CD4-positive, alpha-beta T cell (primary cell): ENCODE measurements at regions of chr22 and their contacts with region 1.

Region 1: DNA sequence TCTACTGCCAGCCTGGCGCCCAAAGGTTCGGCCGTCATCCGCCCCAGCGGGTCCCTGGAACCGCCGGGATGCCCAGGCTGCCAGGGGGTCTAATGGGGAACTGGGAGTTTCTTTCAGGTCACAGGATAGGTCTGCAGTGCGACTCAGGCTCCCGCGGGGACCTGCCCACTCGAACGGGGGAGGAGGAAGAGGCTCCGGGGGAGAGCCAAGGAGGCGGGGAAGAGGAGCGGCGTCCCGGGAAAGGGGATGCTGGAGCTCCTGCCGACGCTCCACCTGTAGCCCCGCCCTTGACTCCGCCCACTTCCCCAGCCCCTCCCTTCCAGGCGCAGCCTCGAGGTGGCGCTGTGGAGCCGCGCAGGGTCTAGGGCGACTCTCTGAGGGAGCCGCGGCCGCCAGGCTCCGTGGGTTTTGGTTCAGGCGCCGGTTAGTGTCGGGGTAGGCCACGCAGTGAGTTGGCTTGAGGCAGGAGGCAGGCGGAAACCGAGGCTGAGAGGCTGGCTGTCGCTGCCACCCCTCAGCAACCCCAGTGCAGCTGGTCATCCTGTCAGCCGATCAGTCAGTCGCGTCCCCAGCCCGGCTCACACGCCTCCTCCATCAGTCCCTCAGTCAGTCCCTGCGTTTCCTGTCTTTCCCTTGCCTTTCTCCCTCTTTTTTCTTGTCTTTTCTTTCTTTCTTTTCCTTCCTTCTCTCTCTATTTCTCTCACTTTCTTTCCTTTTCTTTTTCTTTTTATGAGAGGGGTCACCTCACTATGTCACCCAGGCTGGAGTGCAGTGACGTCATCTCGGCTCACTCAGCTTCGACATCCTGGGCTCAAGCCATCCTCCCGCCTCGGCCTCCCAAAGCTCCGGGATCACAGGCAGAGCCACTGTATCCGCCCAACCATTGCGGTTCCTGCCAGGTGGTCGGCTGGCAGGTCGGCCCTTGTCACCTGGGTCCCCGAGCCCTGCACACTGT is 26.4 kb downstream of the YWHAH start:
- DNase-seq: peak; percentile 77 to 93 (median 87)
- ATAC-seq: peak; percentile 93
- H3K4me3 ChIP-seq: peak overlapping the region; percentile 56
- H3K4me3 Mint-ChIP-seq: peak overlapping the region; percentile 82
- H3K27ac ChIP-seq: no peak overlapping the region
- H3K27ac Mint-ChIP-seq: peak overlapping the region; percentile 3
- H3K4me1 ChIP-seq: peaks cover 20% of the 10 kb centered on the region
- H3K4me1 Mint-ChIP-seq: peaks cover 13% of the 10 kb centered on the region
- H3K27me3 ChIP-seq: no peaks in the 10 kb centered on the region
- H3K27me3 Mint-ChIP-seq: no peaks in the 10 kb centered on the region
- CTCF ChIP-seq: peak; percentile 90

Region 2: GRCh38 chr22:31872209-31872608 is 98.6 kb before region 1 on chr22:
- CTCF ChIA-PET with region 1: interaction called, 4 read pairs
- POLR2A ChIA-PET with region 1: no interaction called
- intact Hi-C with region 1: loop called in 1 of 2 experiments (anchors 1 kb)
- DNase-seq: peak in 7 of 14 experiments; percentile 1 to 40 (median 23)
- ATAC-seq: no peak
- H3K4me3 ChIP-seq: no peak overlapping the region
- H3K4me3 Mint-ChIP-seq: no peak overlapping the region
- H3K27ac ChIP-seq: no peak overlapping the region
- H3K27ac Mint-ChIP-seq: no peak overlapping the region
- H3K4me1 ChIP-seq: no peaks in the 10 kb centered on the region
- H3K4me1 Mint-ChIP-seq: no peaks in the 10 kb centered on the region
- H3K27me3 ChIP-seq: no peaks in the 10 kb centered on the region
- H3K27me3 Mint-ChIP-seq: no peaks in the 10 kb centered on the region
- CTCF ChIP-seq: no peak

Region 3: GRCh38 chr22:31954535-31955523 is 15.9 kb before region 1 on chr22:
- CTCF ChIA-PET with region 1: interaction called, 42 read pairs
- POLR2A ChIA-PET with region 1: interaction called, 4 read pairs
- intact Hi-C with region 1: no loop called
- DNase-seq: peak in 1 of 14 experiments; percentile 38
- ATAC-seq: peak; percentile 60
- H3K4me3 ChIP-seq: no peak overlapping the region
- H3K4me3 Mint-ChIP-seq: peak overlapping the region; percentile 31
- H3K27ac ChIP-seq: peak overlapping the region in 1 of 2 donors; percentile 39
- H3K27ac Mint-ChIP-seq: peak overlapping the region; percentile 86
- H3K4me1 ChIP-seq: peaks cover 73% of the 10 kb centered on the region
- H3K4me1 Mint-ChIP-seq: peaks cover 83% of the 10 kb centered on the region
- H3K27me3 ChIP-seq: no peaks in the 10 kb centered on the region
- H3K27me3 Mint-ChIP-seq: no peaks in the 10 kb centered on the region
- CTCF ChIP-seq: no peak

Region 4: GRCh38 chr22:32265882-32266767 is 295.4 kb after region 1 on chr22:
- CTCF ChIA-PET with region 1: interaction called, 9 read pairs
- POLR2A ChIA-PET with region 1: no interaction called
- intact Hi-C with region 1: loop called in 1 of 2 experiments (anchors 2 kb)
- DNase-seq: peak; percentile 40 to 81 (median 56)
- ATAC-seq: peak; percentile 66
- H3K4me3 ChIP-seq: no peak overlapping the region
- H3K4me3 Mint-ChIP-seq: no peak overlapping the region
- H3K27ac ChIP-seq: no peak overlapping the region
- H3K27ac Mint-ChIP-seq: no peak overlapping the region
- H3K4me1 ChIP-seq: peaks cover 4% of the 10 kb centered on the region
- H3K4me1 Mint-ChIP-seq: peaks cover 10% of the 10 kb centered on the region
- H3K27me3 ChIP-seq: no peaks in the 10 kb centered on the region
- H3K27me3 Mint-ChIP-seq: peaks cover 9% of the 10 kb centered on the region
- CTCF ChIP-seq: peak; percentile 86

Region 5: DNA sequence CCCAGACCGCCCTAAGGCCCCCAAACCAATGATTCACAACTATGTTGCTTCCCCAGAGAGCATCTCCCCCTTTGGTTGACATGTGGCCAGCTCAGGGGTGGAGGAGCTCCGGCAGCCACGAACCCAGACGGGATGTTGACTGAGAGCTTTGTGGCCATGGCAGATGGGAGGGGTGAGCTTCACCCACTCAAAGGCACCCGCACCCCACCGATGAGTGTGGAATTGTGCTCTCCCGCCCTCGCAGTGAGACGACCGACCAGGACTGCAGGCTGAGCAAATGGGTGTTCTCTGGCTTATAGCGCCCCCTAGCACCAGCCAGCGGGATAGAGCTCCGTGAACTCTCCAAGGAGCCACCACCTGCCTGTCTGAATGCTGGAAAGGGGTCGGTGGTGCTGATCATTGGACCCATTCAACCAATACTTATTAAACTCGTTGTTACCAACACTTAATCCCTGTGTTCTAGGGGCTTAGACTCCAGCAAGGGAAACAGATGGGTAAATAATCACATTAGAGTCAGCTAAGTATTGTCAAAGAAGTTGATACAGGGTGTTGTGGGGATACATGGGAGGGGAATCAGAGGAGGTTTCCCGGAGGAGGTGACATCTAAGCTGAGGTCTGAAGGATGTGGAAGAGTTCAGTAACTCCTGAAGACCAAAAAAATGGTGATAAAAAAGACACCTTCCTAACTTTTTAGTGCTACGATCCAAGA is 826.3 kb after region 1 on chr22:
- CTCF ChIA-PET with region 1: no interaction called
- POLR2A ChIA-PET with region 1: no interaction called
- intact Hi-C with region 1: loop called in 1 of 2 experiments (anchors 10 kb)
- DNase-seq: peak; percentile 25 to 76 (median 42)
- ATAC-seq: peak; percentile 62
- H3K4me3 ChIP-seq: no peak overlapping the region
- H3K4me3 Mint-ChIP-seq: no peak overlapping the region
- H3K27ac ChIP-seq: no peak overlapping the region
- H3K27ac Mint-ChIP-seq: no peak overlapping the region
- H3K4me1 ChIP-seq: peaks cover 10% of the 10 kb centered on the region
- H3K4me1 Mint-ChIP-seq: no peaks in the 10 kb centered on the region
- H3K27me3 ChIP-seq: peaks cover 14 to 27% of the 10 kb centered on the region in 2 experiments
- H3K27me3 Mint-ChIP-seq: peaks cover 37% of the 10 kb centered on the region
- CTCF ChIP-seq: peak; percentile 71